ENCODE measurements at regions of chr7 and their contacts with region 1.

Region 1: GRCh38 chr7:101688183-101688831 is 59.2 kb upstream of the MYL10 start:
- DNase-seq: peak; percentile 66
- H3K4me3 Mint-ChIP-seq: no peak overlapping the region
- H3K27ac Mint-ChIP-seq: no peak overlapping the region
- H3K4me1 Mint-ChIP-seq: no peaks in the 10 kb centered on the region
- H3K27me3 Mint-ChIP-seq: no peaks in the 10 kb centered on the region
- CTCF ChIP-seq: peak; percentile 95

Region 2: DNA sequence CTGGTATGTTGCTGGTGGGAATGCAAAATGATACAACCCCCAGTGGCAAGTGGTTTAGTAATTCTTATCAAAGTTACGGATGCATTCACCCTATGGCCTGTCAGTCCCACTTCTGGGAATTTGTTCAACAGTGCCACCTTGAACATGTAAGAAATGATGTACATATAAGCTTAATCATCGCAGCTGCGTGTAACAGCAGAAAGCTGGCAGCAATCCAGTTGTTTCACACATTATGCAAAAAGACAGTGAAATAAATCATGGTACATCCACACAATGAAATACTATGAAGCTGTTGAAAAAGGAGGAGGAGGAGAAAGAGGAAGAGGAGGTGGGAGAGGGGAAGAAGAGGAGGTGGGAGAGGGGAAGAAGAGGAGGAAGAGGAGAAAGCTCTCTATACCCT is 17.0 kb after region 1 on chr7:
- CTCF ChIA-PET with region 1: interaction called, 10 read pairs
- POLR2A ChIA-PET with region 1: no interaction called
- intact Hi-C with region 1: no loop called
- DNase-seq: peak; percentile 81
- H3K4me3 Mint-ChIP-seq: no peak overlapping the region
- H3K27ac Mint-ChIP-seq: no peak overlapping the region
- H3K4me1 Mint-ChIP-seq: peaks cover 6% of the 10 kb centered on the region
- H3K27me3 Mint-ChIP-seq: peaks cover 15% of the 10 kb centered on the region
- CTCF ChIP-seq: no peak

Region 3: GRCh38 chr7:101862280-101863220 is 174.2 kb after region 1 on chr7:
- CTCF ChIA-PET with region 1: no interaction called
- POLR2A ChIA-PET with region 1: no interaction called
- intact Hi-C with region 1: no loop called
- DNase-seq: no peak
- H3K4me3 Mint-ChIP-seq: no peak overlapping the region
- H3K27ac Mint-ChIP-seq: no peak overlapping the region
- H3K4me1 Mint-ChIP-seq: peaks cover 14% of the 10 kb centered on the region
- H3K27me3 Mint-ChIP-seq: no peaks in the 10 kb centered on the region
- CTCF ChIP-seq: no peak

Measured in MCF 10A (cell line).